OCI-LY7 (cell line): ENCODE measurements at regions of chr6 and their contacts with region 1.

Region 1: DNA sequence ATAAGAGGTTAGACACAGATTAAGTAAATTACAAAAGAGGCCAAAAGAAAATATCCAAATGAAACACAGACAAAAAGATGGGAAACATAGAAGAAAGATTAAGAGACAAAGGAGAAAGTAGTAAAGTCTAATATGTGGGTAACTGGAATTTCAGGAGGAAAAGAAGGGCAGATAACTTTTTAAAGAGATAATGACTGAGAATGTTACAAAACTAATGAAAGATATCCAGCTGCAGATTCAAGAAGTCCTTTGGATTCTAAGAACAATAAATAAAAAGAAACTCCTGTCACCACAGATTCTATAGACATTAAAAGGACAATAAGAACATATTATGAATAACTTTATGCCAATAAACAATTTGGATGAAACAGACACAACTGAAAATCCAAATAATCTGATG is 90.1 kb downstream of the WASF1 start:
- DNase-seq: no peak
- H3K4me3 ChIP-seq: no peak overlapping the region
- H3K27ac ChIP-seq: peak overlapping the region; percentile 92
- H3K4me1 ChIP-seq: peaks cover 36% of the 10 kb centered on the region
- CTCF ChIP-seq: no peak

Region 2: GRCh38 chr6:110075406-110075805 is 13.9 kb before region 1 on chr6:
- CTCF ChIA-PET with region 1: no interaction called
- POLR2A ChIA-PET with region 1: interaction called, 14 read pairs
- intact Hi-C with region 1: no loop called
- DNase-seq: no peak
- H3K4me3 ChIP-seq: no peak overlapping the region
- H3K27ac ChIP-seq: no peak overlapping the region
- H3K4me1 ChIP-seq: peaks cover 9% of the 10 kb centered on the region
- CTCF ChIP-seq: no peak

Region 3: DNA sequence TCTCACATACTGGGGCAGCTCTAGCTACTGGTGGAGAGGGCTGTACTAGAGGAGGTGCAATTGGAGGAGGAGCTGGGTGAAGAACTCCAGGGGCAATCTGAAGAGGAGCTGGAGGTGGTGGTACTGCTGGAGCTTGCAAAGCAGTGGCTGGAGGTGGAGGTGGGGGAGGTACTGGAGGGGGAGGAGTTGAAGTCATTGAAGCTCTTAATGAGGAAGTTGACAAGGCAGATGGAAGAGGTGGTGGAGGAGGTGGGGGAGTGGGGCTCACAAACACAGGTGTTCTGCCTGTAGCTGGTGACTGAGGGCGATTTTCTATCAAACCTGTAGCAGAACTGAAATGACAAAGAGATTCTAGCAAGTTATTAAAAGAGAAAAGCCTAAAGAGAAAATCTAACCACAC is 12.6 kb after region 1 on chr6:
- CTCF ChIA-PET with region 1: no interaction called
- POLR2A ChIA-PET with region 1: interaction called, 20 read pairs
- intact Hi-C with region 1: no loop called
- DNase-seq: peak; percentile 86
- H3K4me3 ChIP-seq: peak overlapping the region; percentile 22
- H3K27ac ChIP-seq: peak overlapping the region; percentile 63
- H3K4me1 ChIP-seq: peaks cover 26% of the 10 kb centered on the region
- CTCF ChIP-seq: no peak